ENCODE measurements at regions of chr1 and their contacts with region 1.

Region 1: GRCh38 chr1:119140177-119141019 is at the start of gene WARS2:
- DNase-seq: peak; percentile 94
- ATAC-seq: peak; percentile 95
- H3K4me3 Mint-ChIP-seq: no peak within 1 kb of the TSS
- H3K27ac Mint-ChIP-seq: no peak within 1 kb of the TSS
- H3K4me1 Mint-ChIP-seq: peaks cover 13% of the 10 kb centered on the region
- H3K27me3 Mint-ChIP-seq: no peaks in the 10 kb centered on the region
- total RNA-seq, gene WARS2: 16.0 to 25.2 TPM

Region 2: DNA sequence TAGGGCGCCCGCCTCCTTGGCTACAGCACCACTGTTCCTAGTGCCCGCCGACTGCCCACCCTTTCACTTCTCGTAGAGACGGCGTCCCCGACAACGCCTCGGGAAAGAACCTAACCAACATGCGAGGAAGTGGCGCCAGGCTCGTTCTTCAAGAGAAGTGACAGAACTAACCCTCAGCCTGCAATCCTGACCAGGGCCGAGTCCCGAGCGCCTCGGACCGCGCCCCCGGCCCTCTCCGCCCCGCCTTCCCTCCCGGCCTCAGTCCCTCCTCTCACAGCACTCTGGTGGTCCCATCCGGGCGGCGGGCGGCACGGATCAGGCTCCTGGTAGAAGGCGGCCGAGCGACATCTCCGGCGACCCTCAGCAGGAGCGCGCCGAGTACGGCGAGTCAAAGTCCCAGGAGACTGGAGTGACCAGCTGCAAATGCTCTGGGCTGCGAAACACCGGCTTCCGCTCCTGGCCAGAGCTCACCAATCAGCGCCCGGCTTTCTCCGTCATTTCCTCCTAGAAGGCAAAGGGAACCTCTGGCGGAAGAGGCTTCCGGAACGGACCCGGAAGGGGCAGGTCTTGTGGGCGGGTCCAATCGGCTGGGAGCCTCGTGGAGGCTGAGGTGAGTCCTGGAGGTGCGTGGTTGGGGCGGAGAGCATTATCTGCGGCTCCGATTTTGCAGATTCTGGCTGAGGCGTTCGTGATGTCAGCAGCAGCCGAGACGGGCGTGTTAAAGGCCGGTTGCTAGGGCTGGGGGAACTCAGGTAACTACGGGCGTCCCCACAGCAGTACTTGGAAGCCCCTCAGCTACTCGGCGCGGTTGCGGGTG is 1211.0 kb before region 1 on chr1 and contains the starts of genes GDAP2 and WDR3:
- CTCF ChIA-PET with region 1: no interaction called
- POLR2A ChIA-PET with region 1: no interaction called
- intact Hi-C with region 1: loop called (anchors 1 to 10 kb)
- DNase-seq: peak; percentile 98
- ATAC-seq: peak; percentile 97
- H3K4me3 Mint-ChIP-seq: peak within 1 kb of the TSS; percentile 94
- H3K27ac Mint-ChIP-seq: peak within 1 kb of the TSS; percentile 90
- H3K4me1 Mint-ChIP-seq: peaks cover 54% of the 10 kb centered on the region
- H3K27me3 Mint-ChIP-seq: no peaks in the 10 kb centered on the region
- total RNA-seq, gene GDAP2: 18.8 to 20.9 TPM
- total RNA-seq, gene WDR3: 45.0 to 63.7 TPM

Region 3: DNA sequence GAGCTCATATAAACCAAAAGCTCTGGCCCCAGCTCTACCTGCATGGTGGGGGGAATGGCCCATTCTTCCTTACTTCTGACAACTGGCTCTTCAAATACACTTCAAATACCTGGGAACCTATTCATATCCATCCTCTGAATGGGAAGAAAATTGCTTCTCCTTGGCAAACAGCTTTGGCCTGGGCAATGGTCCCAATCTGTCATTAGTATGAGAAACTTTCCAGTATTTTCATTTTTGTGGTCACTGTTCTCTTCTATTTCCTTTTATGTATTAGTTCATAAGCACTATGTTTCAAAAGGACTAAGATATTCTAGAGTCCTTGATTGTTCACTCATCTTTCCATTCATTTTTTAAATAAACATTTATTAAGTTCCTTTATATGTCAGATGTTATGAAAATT is 269.3 kb after region 1 on chr1:
- CTCF ChIA-PET with region 1: no interaction called
- POLR2A ChIA-PET with region 1: no interaction called
- intact Hi-C with region 1: no loop called
- DNase-seq: no peak
- ATAC-seq: no peak
- H3K4me3 Mint-ChIP-seq: no peak overlapping the region
- H3K27ac Mint-ChIP-seq: no peak overlapping the region
- H3K4me1 Mint-ChIP-seq: no peaks in the 10 kb centered on the region
- H3K27me3 Mint-ChIP-seq: peaks cover 2% of the 10 kb centered on the region

Region 4: DNA sequence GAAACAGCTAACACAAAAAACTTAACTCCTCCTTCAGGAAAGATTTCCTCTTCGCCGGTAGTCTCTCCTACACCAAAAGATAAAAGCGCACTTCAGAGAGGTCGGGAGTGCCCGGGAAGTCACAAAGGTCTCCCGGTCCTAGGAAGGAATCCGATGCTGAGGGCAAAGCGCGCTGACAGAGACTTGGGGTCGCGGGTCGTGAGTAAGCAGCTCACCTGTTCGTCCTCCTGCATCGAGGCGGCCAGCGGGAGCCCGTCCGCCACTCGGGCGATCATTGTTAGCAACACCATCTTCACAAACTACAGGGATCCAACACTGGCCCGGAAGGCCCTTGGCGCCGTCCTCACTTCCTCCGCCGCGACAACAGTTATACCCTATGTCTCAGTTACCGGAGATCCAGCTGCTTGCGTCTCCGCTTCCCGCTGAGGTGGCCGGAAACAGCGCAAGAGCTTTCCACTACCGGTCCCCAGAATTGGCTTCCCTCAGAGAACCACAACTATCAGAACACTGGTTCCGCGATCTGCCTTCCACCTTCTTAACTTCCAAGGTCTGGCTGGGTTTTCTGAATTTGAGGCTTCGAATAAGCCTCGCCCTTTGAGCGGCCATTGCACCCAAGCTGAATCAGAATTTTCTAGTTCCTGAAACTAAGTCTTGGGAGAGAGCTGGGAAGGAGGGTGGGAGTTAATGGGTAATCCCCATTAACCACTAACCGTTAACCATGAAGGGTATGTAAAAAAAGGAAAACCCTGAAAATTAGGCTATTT is 1035.9 kb after region 1 on chr1 and contains the start of gene SEC22B:
- CTCF ChIA-PET with region 1: no interaction called
- POLR2A ChIA-PET with region 1: no interaction called
- intact Hi-C with region 1: loop called in 1 of 2 experiments (anchors 5 kb)
- DNase-seq: peak; percentile 92
- ATAC-seq: peak; percentile 100
- H3K4me3 Mint-ChIP-seq: peak within 1 kb of the TSS; percentile 98
- H3K27ac Mint-ChIP-seq: peak within 1 kb of the TSS; percentile 98
- H3K4me1 Mint-ChIP-seq: no peaks in the 10 kb centered on the region
- H3K27me3 Mint-ChIP-seq: no peaks in the 10 kb centered on the region
- total RNA-seq, gene SEC22B: 19.7 to 20.4 TPM